HEK293T (cell line): ENCODE measurements at regions of chr10 and their contacts with region 1.

Region 1: DNA sequence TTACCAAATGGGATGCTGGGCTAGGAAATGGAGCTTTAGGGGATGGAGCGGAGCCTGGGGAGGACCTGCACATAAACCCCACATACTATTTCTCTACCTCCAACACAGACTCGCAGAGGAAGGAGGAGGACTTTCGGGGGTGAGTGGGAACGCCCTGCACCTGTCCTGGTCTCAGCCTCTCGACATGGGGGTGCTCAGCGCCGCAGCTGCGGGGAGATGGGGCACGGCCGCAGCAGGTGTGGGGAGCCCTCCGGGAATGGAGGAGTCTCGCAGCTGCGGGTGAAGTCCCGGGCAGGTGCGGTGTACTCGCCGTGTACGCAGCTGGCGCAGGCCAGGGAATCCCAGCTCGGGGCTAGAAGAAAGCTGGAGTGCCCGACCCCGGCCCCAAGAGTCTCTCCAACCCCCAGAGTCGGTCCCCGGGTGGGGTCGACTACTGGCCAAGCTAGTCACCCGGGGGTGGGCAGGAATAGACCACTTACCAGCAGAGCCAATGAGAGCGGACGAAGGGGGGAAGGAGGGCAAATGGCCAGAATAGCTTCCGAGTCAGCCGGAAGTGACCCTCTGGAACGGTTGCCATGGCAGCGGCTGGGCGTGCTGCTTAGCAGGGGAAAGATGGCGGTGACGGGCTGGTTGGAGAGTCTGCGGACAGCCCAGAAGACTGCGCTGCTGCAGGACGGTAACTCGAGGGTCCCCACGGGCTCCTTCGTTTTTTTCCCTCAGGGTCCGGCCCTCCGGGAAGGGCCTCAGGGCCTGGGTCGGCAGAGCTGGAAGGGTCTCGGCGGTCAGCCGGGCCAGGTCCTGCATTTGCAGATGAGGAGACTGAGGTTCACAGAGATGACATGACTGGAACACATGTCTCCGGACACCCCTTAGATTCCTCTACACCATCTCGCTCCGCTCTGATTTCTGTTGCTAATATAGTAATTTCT is at the starts of genes DPCD and POLL:
- DNase-seq: peak; percentile 99

Region 2: DNA sequence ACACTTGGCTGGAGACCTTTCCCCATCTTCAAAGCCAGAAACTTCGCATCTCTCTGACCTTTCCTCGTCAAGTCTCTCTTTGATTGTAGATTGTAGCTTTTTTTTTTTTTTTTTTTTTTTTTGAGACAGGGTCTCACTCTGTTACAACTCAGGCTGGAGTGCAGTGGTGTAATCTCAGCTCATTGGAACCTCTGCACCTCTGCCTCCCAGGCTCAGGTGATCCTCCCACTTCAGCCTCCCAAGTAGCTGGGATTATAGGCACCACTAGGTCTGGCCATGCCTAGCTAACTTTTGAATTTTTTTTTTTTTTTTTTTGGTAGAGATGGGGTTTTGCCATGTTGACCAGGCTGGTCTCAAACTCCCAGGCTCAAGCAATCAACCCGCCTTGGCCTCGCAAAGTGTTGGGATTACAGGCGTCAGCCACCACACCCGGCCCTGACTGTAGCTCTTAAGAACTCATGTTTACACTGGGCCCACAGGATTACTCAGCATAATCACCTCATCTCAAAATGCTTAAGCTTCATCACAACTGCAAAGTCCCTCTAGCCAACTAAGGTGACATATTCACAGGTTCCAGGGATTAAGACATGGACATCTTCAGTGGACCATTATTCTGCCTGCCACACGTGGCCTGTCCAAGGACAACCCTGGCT is 11.7 kb before region 1 on chr10:
- CTCF ChIA-PET with region 1: no interaction called
- POLR2A ChIA-PET with region 1: interaction called, 10 read pairs
- DNase-seq: no peak